CD8-positive, alpha-beta T cell (primary cell): ENCODE measurements at regions of chr2 and their contacts with region 1.

Region 1: DNA sequence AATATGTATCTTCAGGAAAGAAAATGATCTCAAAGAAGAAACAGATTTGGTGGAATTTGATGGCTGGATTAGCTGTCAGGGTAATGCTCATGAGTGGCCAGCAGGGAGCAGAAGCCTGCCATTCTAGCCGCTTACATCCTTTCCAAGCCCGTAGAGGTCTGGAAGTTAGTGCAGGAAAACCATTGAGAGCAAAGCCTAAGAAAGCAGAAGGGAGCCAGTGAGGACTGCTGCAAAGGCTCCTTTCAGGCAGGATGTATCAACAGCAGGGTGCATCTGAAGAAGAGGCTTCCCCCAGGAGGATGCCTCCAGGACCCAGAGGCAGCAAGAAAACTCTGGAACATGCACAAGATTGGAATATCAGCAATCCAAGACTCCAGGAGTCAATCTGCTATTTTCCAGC is 22.9 kb upstream of the LBH start:
- DNase-seq: peak in 6 of 9 experiments; percentile 37 to 73 (median 55)
- ATAC-seq: peak; percentile 59
- H3K4me3 ChIP-seq: peak overlapping the region in 1 of 2 experiments; percentile 1
- H3K4me3 Mint-ChIP-seq: peak overlapping the region; percentile 59
- H3K27ac ChIP-seq: peak overlapping the region in 1 of 2 experiments; percentile 40
- H3K27ac Mint-ChIP-seq: peak overlapping the region; percentile 82
- H3K4me1 ChIP-seq: peaks cover 25% of the 10 kb centered on the region
- H3K4me1 Mint-ChIP-seq: peaks cover 26% of the 10 kb centered on the region
- H3K27me3 ChIP-seq: no peaks in the 10 kb centered on the region
- H3K27me3 Mint-ChIP-seq: no peaks in the 10 kb centered on the region
- CTCF ChIP-seq: peak; percentile 81

Region 2: DNA sequence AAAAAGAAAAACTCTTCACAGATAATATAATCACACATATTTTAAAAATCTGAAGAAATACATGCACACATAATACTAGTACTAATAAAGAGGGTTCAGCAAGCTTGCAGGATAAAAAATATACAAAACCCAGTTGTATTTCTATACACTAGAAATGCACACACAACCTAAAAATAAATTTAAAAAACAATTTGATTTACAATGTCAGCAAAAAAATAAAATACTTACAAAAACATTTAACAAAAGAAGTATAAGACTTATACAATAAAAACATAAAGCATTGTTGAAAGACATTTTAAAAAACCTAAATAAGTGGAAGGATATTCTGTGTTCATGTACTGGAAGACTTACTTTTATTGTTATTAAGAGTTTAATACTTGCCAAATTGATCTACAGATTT is 205.3 kb before region 1 on chr2:
- CTCF ChIA-PET with region 1: no interaction called
- POLR2A ChIA-PET with region 1: no interaction called
- intact Hi-C with region 1: no loop called
- DNase-seq: no peak
- ATAC-seq: no peak
- H3K4me3 ChIP-seq: no peak overlapping the region
- H3K4me3 Mint-ChIP-seq: no peak overlapping the region
- H3K27ac ChIP-seq: no peak overlapping the region
- H3K27ac Mint-ChIP-seq: no peak overlapping the region
- H3K4me1 ChIP-seq: no peaks in the 10 kb centered on the region
- H3K4me1 Mint-ChIP-seq: no peaks in the 10 kb centered on the region
- H3K27me3 ChIP-seq: no peaks in the 10 kb centered on the region
- H3K27me3 Mint-ChIP-seq: peaks cover 2% of the 10 kb centered on the region
- CTCF ChIP-seq: no peak

Region 3: DNA sequence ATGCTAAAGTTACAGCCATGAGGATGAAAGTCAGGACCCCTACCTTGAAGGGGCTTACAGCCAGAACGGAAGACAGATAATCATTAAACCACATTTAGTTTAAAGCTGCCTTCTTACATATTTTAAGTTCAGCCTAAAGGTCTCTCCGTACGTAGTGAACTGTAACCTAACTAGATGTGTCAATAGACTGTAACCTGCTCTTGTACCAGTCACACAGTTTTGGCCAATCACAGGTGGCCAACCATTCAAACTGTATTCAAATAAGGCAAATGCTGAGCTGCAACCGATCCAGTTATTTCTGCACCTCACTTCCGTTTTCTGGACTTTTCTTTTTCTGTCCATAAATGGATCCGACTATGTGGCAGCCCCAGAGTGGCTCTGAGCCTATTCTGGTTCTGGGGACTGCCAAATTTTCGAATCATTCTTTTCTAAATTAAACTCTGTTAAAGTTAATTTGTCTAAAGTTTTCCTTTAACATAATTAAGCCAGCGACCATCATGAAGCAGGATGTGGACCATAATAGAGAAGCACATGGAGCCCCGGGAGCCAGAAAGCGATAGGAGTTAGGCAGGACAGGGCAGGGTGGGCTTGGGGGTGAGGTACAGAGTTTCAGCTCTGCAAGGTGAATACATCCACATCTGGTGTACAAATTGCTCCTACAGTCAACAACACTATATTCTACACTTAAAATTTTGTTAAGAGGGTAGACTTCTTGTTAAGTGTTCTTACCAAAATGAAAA is 110.0 kb before region 1 on chr2:
- CTCF ChIA-PET with region 1: no interaction called
- POLR2A ChIA-PET with region 1: no interaction called
- intact Hi-C with region 1: loop called in 1 of 2 experiments (anchors 5 kb)
- DNase-seq: no peak
- ATAC-seq: no peak
- H3K4me3 ChIP-seq: no peak overlapping the region
- H3K4me3 Mint-ChIP-seq: no peak overlapping the region
- H3K27ac ChIP-seq: no peak overlapping the region
- H3K27ac Mint-ChIP-seq: no peak overlapping the region
- H3K4me1 ChIP-seq: no peaks in the 10 kb centered on the region
- H3K4me1 Mint-ChIP-seq: no peaks in the 10 kb centered on the region
- H3K27me3 ChIP-seq: no peaks in the 10 kb centered on the region
- H3K27me3 Mint-ChIP-seq: peaks cover 22% of the 10 kb centered on the region
- CTCF ChIP-seq: no peak

Region 4: DNA sequence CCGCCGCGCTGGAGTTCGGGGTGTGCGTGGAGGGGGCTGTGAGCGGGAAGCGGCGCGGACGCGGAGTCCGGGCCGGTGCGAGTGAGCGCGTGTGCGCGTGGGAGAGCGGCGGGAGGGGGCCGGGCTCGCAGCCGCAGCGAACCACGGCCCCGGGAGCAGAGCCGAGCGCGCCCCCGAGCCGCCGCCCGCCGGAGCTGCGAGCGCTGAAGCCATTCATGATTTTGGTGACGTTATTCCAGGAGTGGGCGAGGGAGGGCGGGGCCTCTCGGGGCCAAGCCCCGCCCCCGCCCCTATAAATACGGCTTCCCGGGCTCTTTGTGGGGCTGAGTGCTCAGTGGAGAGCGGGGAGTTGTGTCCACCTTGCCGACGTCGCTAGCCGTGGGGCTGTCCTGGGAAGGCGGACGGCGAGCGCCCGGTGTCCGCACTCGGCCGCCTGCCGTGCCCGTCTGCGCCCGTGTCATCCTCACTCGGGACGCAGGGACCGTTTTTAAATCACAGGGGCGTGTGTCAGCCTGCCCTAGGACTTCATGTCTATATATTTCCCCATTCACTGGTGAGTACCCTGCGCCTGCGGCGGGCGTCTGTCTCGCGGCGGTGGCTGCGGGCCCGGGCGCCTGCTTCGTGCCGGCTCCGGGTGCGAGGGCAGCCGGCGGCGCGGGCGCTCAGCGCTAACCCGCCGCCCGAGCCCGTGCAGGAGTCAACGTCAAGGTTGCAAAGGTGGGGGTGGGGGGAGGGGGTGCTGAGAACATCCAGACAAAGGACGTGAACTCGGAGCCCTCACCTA is 23.0 kb after region 1 on chr2 and contains the start of gene LBH:
- CTCF ChIA-PET with region 1: interaction called, 347 read pairs
- POLR2A ChIA-PET with region 1: interaction called, 76 read pairs
- intact Hi-C with region 1: loop called in 1 of 2 experiments (anchors 1 kb)
- DNase-seq: peak; percentile 82 to 97 (median 89)
- ATAC-seq: peak; percentile 48
- H3K4me3 ChIP-seq: peak within 1 kb of the TSS; percentile 89 to 96
- H3K4me3 Mint-ChIP-seq: peak within 1 kb of the TSS; percentile 94
- H3K27ac ChIP-seq: peak within 1 kb of the TSS; percentile 92 to 99
- H3K27ac Mint-ChIP-seq: peak within 1 kb of the TSS; percentile 96
- H3K4me1 ChIP-seq: peaks cover 52% of the 10 kb centered on the region
- H3K4me1 Mint-ChIP-seq: peaks cover 64% of the 10 kb centered on the region
- H3K27me3 ChIP-seq: no peaks in the 10 kb centered on the region
- H3K27me3 Mint-ChIP-seq: no peaks in the 10 kb centered on the region
- CTCF ChIP-seq: no peak
- total RNA-seq, gene LBH: 127 to 133 TPM

Region 5: DNA sequence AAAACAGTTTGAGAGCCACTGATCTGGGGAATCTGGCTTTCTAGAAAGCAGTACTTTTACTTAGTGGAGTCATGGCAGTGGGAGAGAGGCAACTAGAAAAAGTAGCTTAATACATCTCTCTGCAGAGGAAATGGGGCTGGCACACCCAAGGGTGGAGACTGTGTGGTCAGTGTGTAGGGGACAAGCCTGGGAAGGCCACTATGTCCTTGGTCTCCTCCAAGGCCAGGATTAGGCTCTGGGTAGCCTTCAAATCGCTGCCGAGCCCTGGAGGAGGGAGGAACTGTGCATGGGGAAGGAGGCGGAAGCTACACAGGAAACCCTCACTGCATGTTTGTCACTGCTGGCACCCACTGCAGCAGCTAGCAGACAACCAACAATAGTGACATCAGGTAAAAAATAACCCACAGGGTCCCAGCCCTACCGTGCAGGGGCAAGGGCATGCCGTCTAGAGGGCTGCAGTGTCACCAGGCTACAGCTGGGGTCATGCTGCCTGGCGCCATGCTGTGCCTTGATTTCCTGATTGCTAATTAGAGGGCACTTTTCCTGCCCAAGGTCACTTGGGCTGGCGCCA is 57.7 kb after region 1 on chr2:
- CTCF ChIA-PET with region 1: interaction called, 25 read pairs
- POLR2A ChIA-PET with region 1: interaction called, 4 read pairs
- intact Hi-C with region 1: no loop called
- DNase-seq: peak; percentile 49 to 89 (median 71)
- ATAC-seq: peak; percentile 90
- H3K4me3 ChIP-seq: peak overlapping the region; percentile 31 to 40
- H3K4me3 Mint-ChIP-seq: peak overlapping the region; percentile 82
- H3K27ac ChIP-seq: peak overlapping the region; percentile 72 to 87
- H3K27ac Mint-ChIP-seq: peak overlapping the region; percentile 98
- H3K4me1 ChIP-seq: peaks cover 69% of the 10 kb centered on the region
- H3K4me1 Mint-ChIP-seq: peaks cover 85% of the 10 kb centered on the region
- H3K27me3 ChIP-seq: no peaks in the 10 kb centered on the region
- H3K27me3 Mint-ChIP-seq: no peaks in the 10 kb centered on the region
- CTCF ChIP-seq: no peak

Region 6: DNA sequence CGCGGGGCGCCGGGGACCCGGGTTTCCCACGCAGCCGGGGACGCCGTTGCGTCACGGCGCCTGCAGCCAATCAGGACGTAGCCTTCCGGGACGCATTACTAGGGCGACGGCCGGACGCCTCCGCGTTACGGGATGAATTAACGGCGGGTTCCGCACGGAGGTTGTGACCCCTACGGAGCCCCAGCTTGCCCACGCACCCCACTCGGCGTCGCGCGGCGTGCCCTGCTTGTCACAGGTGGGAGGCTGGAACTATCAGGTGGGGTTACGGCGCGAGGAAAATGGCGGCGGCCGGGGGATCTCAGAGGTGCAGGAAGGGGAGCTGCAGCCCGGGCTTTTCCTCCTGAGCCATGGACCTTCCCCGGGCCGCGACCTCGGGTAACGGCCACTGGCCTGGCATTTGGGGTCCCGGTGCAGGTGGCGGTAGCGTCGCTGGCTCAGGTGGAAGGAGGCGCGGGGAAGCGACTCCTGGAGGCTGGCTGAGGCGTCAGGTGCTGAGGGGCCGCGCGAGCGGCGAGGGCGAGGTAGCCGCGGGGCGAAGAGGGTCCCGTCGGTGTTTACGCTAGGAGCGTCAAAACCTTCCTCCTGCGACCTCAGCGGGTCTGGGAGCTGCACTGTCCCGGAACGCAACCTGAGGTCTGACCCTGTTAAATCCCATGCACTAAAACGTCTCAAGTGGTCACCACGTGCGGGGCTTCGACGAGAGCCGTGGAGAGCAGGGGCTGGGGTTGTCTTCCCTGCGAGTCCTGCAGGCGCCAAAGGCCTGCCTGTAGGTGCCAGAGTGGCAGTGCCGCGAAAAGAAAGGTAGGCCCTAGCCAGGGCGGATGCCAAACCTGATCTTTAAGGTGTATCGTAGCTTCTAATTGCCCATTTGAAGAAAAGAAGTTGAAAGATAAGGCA is 238.9 kb after region 1 on chr2 and contains the start of gene LCLAT1:
- CTCF ChIA-PET with region 1: interaction called, 6 read pairs
- POLR2A ChIA-PET with region 1: no interaction called
- intact Hi-C with region 1: loop called in 1 of 2 experiments (anchors 1 kb)
- DNase-seq: peak; percentile 66 to 95 (median 84)
- ATAC-seq: peak; percentile 88
- H3K4me3 ChIP-seq: peak within 1 kb of the TSS; percentile 87 to 99
- H3K4me3 Mint-ChIP-seq: peak within 1 kb of the TSS; percentile 94
- H3K27ac ChIP-seq: peak within 1 kb of the TSS; percentile 92 to 95
- H3K27ac Mint-ChIP-seq: peak within 1 kb of the TSS; percentile 98
- H3K4me1 ChIP-seq: peaks cover 20% of the 10 kb centered on the region
- H3K4me1 Mint-ChIP-seq: peaks cover 45% of the 10 kb centered on the region
- H3K27me3 ChIP-seq: no peaks in the 10 kb centered on the region
- H3K27me3 Mint-ChIP-seq: no peaks in the 10 kb centered on the region
- CTCF ChIP-seq: no peak
- total RNA-seq, gene LCLAT1: 11.3 to 12.1 TPM

Region 7: DNA sequence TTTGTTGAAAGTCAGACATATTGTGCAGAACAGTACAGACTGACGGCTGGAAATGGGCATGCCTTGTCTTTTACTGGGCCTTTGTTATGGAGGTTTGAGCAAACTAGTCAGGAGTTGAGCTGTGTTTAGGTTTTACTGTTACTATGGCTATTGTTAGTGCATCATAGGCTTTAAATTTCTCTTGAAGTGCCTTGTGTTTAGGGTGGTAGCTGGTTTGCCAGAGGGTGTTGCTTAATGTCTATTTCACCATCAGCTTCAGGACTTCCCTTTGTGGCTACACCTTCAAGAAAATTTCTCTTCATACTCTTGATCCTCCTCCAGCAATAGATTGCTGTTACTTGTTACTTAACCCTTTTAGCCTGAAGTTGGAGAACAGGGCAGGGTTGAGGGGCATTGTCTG is 494.2 kb after region 1 on chr2:
- CTCF ChIA-PET with region 1: interaction called, 264 read pairs
- POLR2A ChIA-PET with region 1: interaction called, 3 read pairs
- intact Hi-C with region 1: loop called (anchors 1 kb)
- DNase-seq: no peak
- ATAC-seq: no peak
- H3K4me3 ChIP-seq: no peak overlapping the region
- H3K4me3 Mint-ChIP-seq: no peak overlapping the region
- H3K27ac ChIP-seq: no peak overlapping the region
- H3K27ac Mint-ChIP-seq: no peak overlapping the region
- H3K4me1 ChIP-seq: no peaks in the 10 kb centered on the region
- H3K4me1 Mint-ChIP-seq: peaks cover 4% of the 10 kb centered on the region
- H3K27me3 ChIP-seq: no peaks in the 10 kb centered on the region
- H3K27me3 Mint-ChIP-seq: peaks cover 6% of the 10 kb centered on the region
- CTCF ChIP-seq: no peak